ENCODE measurements at regions of chr20 and their contacts with region 1.

Region 1: DNA sequence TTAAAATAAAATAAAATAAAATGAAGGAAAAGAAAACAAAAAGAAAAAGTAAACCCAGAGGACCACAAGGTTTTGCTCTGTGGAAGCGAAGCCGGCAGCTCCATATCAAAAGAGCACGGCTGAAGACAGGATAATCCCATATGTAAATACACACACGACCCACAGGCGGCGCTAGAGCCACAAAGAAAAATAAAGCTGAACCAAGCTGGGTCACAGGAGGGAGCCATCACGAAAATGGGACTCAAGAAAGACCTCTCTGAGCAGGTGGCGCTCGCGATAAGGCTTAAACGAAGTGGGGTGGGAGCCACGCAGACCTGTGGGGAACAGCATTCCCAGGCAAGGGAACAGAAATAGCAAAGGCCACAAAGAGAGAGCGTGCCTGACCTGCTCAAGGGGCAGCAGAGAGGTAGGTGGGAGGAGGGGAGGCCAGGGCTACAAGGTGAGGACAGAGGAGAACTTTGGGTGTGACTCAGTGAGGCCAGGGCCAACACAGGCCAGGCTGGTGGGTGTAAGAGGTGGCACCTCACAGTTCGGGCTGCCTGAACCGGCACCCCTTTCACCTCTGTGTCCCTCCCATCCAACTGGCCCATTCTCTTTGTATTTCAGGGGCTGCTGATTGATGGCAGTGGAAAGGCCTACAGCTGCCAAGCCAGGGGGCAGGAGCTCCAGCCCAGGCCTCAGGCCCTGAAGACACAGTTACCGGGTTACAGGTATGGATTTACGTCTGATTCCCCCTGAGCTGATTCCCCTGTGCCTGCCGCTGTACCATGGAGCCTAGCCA is 26.0 kb downstream of the PTGIS start:
- DNase-seq: peak; percentile 79
- ATAC-seq: peak; percentile 72
- H3K4me3 Mint-ChIP-seq: no peak overlapping the region
- H3K27ac Mint-ChIP-seq: no peak overlapping the region
- H3K4me1 Mint-ChIP-seq: peaks cover 3% of the 10 kb centered on the region; the same call in 1 of the 2 replicates
- H3K27me3 Mint-ChIP-seq: no peaks in the 10 kb centered on the region
- CTCF ChIP-seq: peak; percentile 85

Region 2: DNA sequence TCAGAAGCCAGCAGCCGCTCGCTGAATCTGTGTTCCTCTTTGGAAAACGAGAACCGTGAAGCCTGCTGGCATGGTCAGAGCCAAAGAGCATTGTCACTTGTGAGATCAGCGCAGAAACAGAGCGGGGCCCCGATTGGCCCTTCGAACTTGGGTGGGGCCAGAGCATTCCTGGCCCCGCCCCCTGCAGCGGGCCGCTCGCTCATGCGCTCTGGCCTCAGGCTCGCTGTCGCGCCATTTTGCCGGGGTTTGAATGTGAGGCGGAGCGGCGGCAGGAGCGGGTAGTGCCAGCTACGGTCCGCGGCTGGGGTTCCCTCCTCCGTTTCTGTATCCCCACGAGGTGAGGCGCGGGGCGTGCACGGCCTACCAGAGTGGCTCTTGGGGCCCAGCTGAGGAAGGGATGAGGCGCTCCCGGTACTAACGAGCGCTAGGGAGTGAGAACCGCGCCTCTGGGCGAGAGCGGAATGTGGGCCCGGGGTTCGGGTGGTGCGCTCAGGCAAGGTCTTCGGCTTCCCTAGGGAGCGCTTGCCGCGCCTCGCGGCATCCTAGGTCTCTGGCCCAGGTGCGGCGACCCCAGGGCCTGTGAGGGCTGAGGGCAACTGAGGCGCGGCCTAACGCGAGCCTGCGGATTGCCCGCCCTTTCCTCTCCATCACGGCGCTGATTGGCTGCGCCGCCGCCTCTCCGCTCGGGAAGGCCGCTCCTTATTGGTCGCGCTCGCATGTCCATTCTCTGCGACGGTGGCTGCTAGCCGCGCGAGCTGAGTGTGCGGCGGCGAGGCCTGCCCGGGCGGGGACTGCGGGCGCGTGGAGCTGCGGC is 495.6 kb before region 1 on chr20 and contains the start of gene CSE1L:
- CTCF ChIA-PET with region 1: no interaction called
- POLR2A ChIA-PET with region 1: no interaction called
- DNase-seq: peak; percentile 92
- ATAC-seq: peak; percentile 90
- H3K4me3 Mint-ChIP-seq: peak within 1 kb of the TSS; percentile 97
- H3K27ac Mint-ChIP-seq: peak within 1 kb of the TSS; percentile 99
- H3K4me1 Mint-ChIP-seq: peaks cover 33% of the 10 kb centered on the region
- H3K27me3 Mint-ChIP-seq: no peaks in the 10 kb centered on the region; the same call in 1 of the 2 replicates
- CTCF ChIP-seq: no peak
- total RNA-seq, gene CSE1L: 192 to 211 TPM (median 204 TPM) in 3 replicates

Region 3: DNA sequence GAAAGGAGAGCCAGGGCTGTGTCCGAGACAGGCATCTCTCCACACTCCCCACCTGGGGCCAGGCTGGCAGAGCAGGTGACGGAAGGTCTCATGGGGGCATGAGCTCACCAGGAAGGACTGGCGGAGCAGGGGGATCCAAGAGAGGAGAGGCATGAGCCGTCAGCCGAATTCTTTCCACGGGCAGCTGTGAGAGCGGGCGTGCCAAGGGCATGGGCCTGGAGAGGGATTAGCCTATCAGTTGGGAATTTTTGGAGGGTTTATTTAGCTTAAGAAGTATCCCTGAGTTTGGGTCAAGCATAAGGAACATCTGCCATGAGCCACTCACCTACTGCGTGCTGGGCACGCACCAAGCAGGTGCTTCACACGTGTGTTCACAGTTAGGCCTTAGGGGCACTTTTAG is 203.9 kb before region 1 on chr20:
- CTCF ChIA-PET with region 1: interaction called, 17 read pairs
- POLR2A ChIA-PET with region 1: no interaction called
- DNase-seq: no peak
- ATAC-seq: no peak
- H3K4me3 Mint-ChIP-seq: no peak overlapping the region
- H3K27ac Mint-ChIP-seq: no peak overlapping the region
- H3K4me1 Mint-ChIP-seq: no peaks in the 10 kb centered on the region
- H3K27me3 Mint-ChIP-seq: 0 out of 2 replicates have a peak, but pooled peaks cover under 1% of the 10 kb centered on the region
- CTCF ChIP-seq: no peak

Region 4: GRCh38 chr20:49460916-49461315 is 81.0 kb before region 1 on chr20:
- CTCF ChIA-PET with region 1: no interaction called
- POLR2A ChIA-PET with region 1: no interaction called
- DNase-seq: no peak
- ATAC-seq: no peak
- H3K4me3 Mint-ChIP-seq: no peak overlapping the region
- H3K27ac Mint-ChIP-seq: no peak overlapping the region
- H3K4me1 Mint-ChIP-seq: no peaks in the 10 kb centered on the region
- H3K27me3 Mint-ChIP-seq: peaks cover 4% of the 10 kb centered on the region; the same call in 1 of the 2 replicates
- CTCF ChIP-seq: no peak

Region 5: GRCh38 chr20:49471397-49471796 is 70.5 kb before region 1 on chr20:
- CTCF ChIA-PET with region 1: no interaction called
- POLR2A ChIA-PET with region 1: no interaction called
- DNase-seq: no peak
- ATAC-seq: no peak
- H3K4me3 Mint-ChIP-seq: no peak overlapping the region
- H3K27ac Mint-ChIP-seq: no peak overlapping the region
- H3K4me1 Mint-ChIP-seq: peaks cover 5% of the 10 kb centered on the region
- H3K27me3 Mint-ChIP-seq: no peaks in the 10 kb centered on the region; the same call in 1 of the 2 replicates
- CTCF ChIP-seq: no peak

Region 6: GRCh38 chr20:49484180-49485140 is 57.5 kb before region 1 on chr20:
- CTCF ChIA-PET with region 1: interaction called, 29 read pairs
- POLR2A ChIA-PET with region 1: no interaction called
- DNase-seq: peak; percentile 90
- ATAC-seq: peak; percentile 78
- H3K4me3 Mint-ChIP-seq: peak overlapping the region; percentile 84
- H3K27ac Mint-ChIP-seq: no peak overlapping the region
- H3K4me1 Mint-ChIP-seq: no peaks in the 10 kb centered on the region; the same call in 1 of the 2 replicates
- H3K27me3 Mint-ChIP-seq: peaks cover 52% of the 10 kb centered on the region
- CTCF ChIP-seq: peak; percentile 65

Region 7: GRCh38 chr20:49557449-49557848 is 15.5 kb after region 1 on chr20:
- CTCF ChIA-PET with region 1: interaction called, 15 read pairs
- POLR2A ChIA-PET with region 1: no interaction called
- DNase-seq: no peak
- ATAC-seq: no peak
- H3K4me3 Mint-ChIP-seq: no peak overlapping the region
- H3K27ac Mint-ChIP-seq: 0 out of 2 replicates have a peak overlapping the region, but pooled peaks have one; percentile 14
- H3K4me1 Mint-ChIP-seq: peaks cover 19% of the 10 kb centered on the region
- H3K27me3 Mint-ChIP-seq: no peaks in the 10 kb centered on the region
- CTCF ChIP-seq: no peak

Region 8: DNA sequence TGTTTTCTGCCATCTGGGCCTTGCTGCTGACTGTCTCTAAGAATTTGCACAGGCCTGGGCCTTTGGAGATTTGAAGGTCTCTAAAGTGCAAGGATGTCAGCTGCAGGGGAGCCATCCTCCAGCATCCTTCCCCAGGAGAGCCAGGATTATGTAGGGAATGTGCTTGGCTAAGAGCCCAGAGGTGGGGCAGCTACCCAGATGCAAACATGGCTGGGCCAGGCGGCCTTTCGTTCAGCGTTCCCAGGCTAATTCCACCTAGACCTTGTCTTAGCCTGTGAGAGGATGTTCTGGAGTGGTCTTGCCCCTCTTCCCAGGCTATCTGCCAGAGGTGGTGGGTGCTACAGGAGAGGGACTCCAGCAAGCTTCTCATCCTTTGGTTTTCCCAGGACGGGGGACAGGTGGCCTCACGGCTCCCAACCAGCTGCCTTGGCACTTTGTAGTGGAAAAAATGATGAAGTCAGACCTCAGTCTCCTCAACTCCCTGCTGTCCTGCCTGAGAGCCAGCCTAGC is 33.7 kb after region 1 on chr20:
- CTCF ChIA-PET with region 1: interaction called, 46 read pairs
- POLR2A ChIA-PET with region 1: no interaction called
- DNase-seq: no peak
- ATAC-seq: no peak
- H3K4me3 Mint-ChIP-seq: no peak overlapping the region
- H3K27ac Mint-ChIP-seq: no peak overlapping the region
- H3K4me1 Mint-ChIP-seq: peaks cover 32% of the 10 kb centered on the region
- H3K27me3 Mint-ChIP-seq: no peaks in the 10 kb centered on the region
- CTCF ChIP-seq: no peak

Region 9: DNA sequence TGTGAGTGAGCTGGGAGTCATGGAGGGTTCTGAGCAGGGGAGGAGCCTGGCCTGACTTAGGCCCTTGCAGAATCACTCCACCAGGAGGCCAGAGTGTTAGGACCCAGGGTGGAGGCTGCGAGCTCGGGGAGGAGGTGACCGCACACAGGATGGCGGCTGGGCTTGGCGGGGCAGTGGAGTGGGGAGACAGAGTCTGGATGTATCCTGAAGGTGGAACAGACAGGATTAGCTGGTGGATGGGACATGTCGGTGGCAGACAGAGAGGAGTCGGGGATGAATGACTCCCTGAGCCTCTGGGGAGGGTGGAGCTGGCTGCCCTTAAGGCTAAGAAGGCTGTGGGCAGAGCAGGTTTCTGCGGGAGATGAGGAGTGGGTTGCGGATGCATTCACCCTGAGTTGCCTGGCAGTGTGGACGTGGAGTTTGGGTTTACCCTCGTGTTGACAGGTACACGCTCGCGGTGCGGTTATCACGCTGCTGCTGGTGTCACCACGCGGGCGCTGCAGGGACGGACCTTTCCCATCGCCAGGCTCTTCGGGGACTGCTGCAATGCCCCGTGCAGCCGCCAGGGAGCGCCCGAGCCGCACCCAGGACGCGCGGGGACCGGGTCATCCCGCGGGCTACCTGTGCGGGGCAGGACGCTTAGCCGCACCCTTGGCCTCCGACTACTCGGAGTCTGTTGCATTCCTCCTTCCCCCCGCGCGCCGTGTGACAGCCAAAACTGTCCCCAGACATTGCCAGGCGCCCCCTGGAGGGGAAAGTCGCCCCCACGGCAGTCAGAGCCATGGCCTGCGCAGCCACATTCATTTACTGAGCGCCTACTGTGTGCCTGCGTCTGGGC is 69.0 kb after region 1 on chr20:
- CTCF ChIA-PET with region 1: interaction called, 540 read pairs
- POLR2A ChIA-PET with region 1: interaction called, 5 read pairs
- DNase-seq: peak; percentile 95
- ATAC-seq: peak; percentile 82
- H3K4me3 Mint-ChIP-seq: peak overlapping the region; percentile 74
- H3K27ac Mint-ChIP-seq: 0 out of 2 replicates have a peak overlapping the region, but pooled peaks have one; percentile 4
- H3K4me1 Mint-ChIP-seq: peaks cover 5% of the 10 kb centered on the region; the same call in 1 of the 2 replicates
- H3K27me3 Mint-ChIP-seq: no peaks in the 10 kb centered on the region
- CTCF ChIP-seq: peak; percentile 100

Region 10: GRCh38 chr20:49893242-49894072 is 351.5 kb after region 1 on chr20:
- CTCF ChIA-PET with region 1: interaction called, 29 read pairs
- POLR2A ChIA-PET with region 1: no interaction called
- DNase-seq: no peak
- ATAC-seq: no peak
- H3K4me3 Mint-ChIP-seq: no peak overlapping the region
- H3K27ac Mint-ChIP-seq: peak overlapping the region; percentile 69
- H3K4me1 Mint-ChIP-seq: peaks cover 26% of the 10 kb centered on the region
- H3K27me3 Mint-ChIP-seq: 0 out of 2 replicates have a peak, but pooled peaks cover 3% of the 10 kb centered on the region
- CTCF ChIP-seq: no peak